PC-9 (cell line): ENCODE measurements at regions of chr22 and their contacts with region 1.

Region 1: DNA sequence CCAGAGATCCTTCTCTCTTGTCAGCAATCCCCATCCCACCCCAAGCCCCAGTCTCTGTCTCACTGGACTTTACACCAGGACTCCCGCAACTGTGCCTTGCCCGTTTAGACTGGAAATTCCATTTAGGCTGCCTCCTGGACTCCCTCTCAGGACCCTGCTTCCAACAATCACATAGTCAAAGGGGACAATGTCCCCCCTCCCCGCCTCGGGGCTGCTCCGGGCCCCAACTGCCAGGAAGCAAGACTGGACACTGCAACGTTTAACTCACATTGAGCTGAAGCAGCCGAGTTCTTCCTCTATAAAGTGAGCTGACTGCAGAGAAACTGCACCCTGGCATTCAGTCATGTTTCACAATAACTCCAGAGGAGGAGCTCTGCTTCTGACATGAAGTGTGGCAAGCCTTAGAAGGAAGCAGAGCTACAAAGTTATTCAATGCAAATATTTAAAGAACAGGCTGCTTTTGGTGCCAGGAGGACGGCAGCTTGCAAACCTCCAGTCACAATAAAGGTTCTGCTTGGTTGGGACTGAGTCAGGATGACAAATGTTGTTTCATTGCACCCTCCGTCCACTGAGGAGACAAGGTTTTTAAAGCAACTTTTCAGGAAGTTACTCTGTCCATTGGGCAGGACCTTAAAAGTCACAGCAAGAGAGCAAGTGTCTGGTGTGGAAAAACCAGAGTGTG is 19.9 kb downstream of the PACSIN2 start:
- DNase-seq: peak; percentile 72 to 99
- H3K4me3 ChIP-seq: peak overlapping the region; percentile 47; the same call in 1 of the 2 replicates
- H3K27ac ChIP-seq: peak overlapping the region; percentile 98
- H3K4me1 ChIP-seq: peaks cover 83% of the 10 kb centered on the region
- H3K27me3 ChIP-seq: no peaks in the 10 kb centered on the region
- CTCF ChIP-seq: no peak

Region 2: DNA sequence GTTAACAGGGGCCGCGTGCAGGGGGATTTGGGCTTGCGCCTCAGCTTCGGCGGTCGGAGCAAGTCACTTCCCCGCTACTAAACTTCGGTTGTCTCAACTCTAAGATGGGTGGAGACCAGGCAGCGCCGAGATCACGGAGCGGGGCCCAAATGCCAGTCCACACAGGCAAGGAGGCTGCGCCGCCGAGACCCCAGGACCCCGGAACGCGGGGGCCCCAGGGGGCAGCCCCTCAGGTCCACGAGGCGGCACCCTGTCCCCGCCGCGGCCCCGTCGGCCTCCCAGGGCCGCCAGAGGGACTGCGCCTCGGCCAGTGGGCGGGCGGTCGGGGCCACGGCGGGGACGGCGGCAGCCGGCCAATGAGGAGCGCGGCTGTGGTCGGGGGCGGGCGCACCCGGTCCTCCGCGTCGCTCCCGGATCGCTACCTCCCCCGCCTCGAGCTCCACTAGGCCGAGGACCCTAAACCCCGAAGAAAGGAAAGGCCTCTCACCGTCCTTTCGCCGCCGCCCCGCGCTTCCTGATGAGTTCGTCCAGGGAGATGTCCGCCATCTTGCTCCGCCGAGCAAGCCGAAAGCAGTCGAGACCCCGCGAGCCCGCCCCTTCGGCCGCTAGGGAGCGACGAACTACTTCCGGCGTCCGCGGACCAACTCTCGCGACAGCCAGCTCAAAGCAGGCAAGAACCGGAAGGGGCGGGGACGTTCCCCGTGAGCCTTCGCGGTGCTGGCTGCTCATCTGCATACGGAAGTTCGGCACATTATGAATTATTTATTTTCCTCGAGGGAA is 380.5 kb before region 1 on chr22 and contains the start of gene POLDIP3:
- CTCF ChIA-PET with region 1: no interaction called
- POLR2A ChIA-PET with region 1: interaction called, 24 read pairs
- intact Hi-C with region 1: no loop called
- DNase-seq: peak; percentile 93 to 97
- H3K4me3 ChIP-seq: peak within 1 kb of the TSS; percentile 100
- H3K27ac ChIP-seq: peak within 1 kb of the TSS; percentile 96
- H3K4me1 ChIP-seq: peaks cover 30% of the 10 kb centered on the region
- H3K27me3 ChIP-seq: no peaks in the 10 kb centered on the region
- CTCF ChIP-seq: no peak
- total RNA-seq, gene POLDIP3: 60.1 and 62.9 TPM in 2 replicates

Region 3: GRCh38 chr22:42919199-42919598 is 75.8 kb before region 1 on chr22:
- CTCF ChIA-PET with region 1: no interaction called
- POLR2A ChIA-PET with region 1: no interaction called
- intact Hi-C with region 1: no loop called
- DNase-seq: peak; percentile 38 to 75
- H3K4me3 ChIP-seq: no peak overlapping the region
- H3K27ac ChIP-seq: peak overlapping the region; percentile 37
- H3K4me1 ChIP-seq: peaks cover 46% of the 10 kb centered on the region
- H3K27me3 ChIP-seq: no peaks in the 10 kb centered on the region
- CTCF ChIP-seq: no peak

Region 4: GRCh38 chr22:43007519-43008102 is 12.6 kb after region 1 on chr22:
- CTCF ChIA-PET with region 1: interaction called, 6 read pairs
- POLR2A ChIA-PET with region 1: interaction called, 10 read pairs
- intact Hi-C with region 1: loop called (anchors 1 kb)
- DNase-seq: no peak
- H3K4me3 ChIP-seq: no peak overlapping the region
- H3K27ac ChIP-seq: no peak overlapping the region
- H3K4me1 ChIP-seq: peaks cover 83% of the 10 kb centered on the region
- H3K27me3 ChIP-seq: no peaks in the 10 kb centered on the region
- CTCF ChIP-seq: no peak

Region 5: DNA sequence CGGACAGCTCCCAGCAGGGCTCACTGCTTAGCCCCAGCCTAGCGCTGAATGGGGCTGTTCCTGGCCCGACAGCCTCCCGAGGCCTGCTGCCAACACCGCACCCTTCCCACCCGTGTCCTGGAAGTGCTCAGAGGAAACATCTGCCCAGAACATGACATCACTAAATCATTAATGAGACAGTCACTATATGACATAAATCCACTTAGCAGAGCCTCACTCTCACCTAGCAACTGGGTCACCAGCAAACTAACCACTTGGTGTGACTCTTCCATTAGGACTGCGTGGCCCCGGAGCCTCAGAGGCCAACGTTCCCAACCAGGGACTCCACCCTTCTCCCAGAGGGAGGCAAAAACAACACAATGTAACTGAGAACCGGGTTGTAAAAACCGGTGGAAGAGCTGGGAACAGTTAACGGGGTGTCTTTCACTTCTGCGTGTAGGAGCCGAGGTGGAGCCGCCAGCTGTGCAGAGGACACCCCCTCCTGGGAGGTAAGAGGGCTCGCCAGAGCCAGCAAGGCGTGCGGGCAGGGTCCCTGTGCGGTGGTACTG is 41.3 kb after region 1 on chr22:
- CTCF ChIA-PET with region 1: interaction called, 3 read pairs
- POLR2A ChIA-PET with region 1: interaction called, 5 read pairs
- intact Hi-C with region 1: loop called (anchors 5 kb)
- DNase-seq: no peak
- H3K4me3 ChIP-seq: no peak overlapping the region
- H3K27ac ChIP-seq: no peak overlapping the region
- H3K4me1 ChIP-seq: peaks cover 9% of the 10 kb centered on the region
- H3K27me3 ChIP-seq: no peaks in the 10 kb centered on the region
- CTCF ChIP-seq: no peak

Region 6: DNA sequence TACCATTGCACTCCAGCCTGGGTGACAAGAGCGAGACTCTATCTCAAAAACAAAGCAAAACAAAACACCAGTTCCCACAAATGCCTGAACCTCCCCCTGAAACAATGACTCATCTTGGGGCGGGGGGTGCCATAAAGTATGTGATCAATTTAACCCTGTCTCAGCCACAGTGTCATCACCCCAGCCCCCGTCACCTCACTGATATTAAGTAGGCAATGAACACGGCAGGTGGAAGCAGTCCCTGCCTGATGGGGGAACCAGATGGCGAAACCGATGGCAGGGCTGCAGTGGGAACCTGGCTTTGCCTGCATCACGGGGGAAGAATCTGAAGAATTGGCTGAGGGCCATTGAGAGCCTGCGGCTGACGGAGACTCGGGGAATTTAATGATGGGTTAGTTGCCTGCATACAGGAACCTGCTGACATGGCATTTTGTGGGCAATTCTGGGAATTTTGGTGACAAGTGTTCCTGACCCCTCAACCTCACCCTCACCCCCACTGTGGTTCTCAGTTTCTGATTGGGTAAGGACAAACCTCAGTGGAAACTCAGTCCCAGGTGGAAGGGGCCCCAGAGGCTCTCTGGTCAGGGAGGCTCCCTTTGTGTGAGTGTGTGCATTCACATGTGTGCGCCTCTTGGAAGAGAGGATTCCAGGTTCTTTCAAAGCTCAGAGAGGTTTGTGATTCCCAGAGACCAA is 1356.8 kb after region 1 on chr22:
- CTCF ChIA-PET with region 1: no interaction called
- POLR2A ChIA-PET with region 1: no interaction called
- intact Hi-C with region 1: no loop called
- DNase-seq: peak; percentile 87 to 93
- H3K4me3 ChIP-seq: peak overlapping the region; percentile 1; the same call in 1 of the 2 replicates
- H3K27ac ChIP-seq: peak overlapping the region; percentile 76
- H3K4me1 ChIP-seq: peaks cover 22% of the 10 kb centered on the region
- H3K27me3 ChIP-seq: no peaks in the 10 kb centered on the region
- CTCF ChIP-seq: no peak

Region 7: GRCh38 chr22:44796972-44797725 is 1802.1 kb after region 1 on chr22:
- CTCF ChIA-PET with region 1: no interaction called
- POLR2A ChIA-PET with region 1: interaction called, 36 read pairs
- intact Hi-C with region 1: no loop called
- DNase-seq: no peak
- H3K4me3 ChIP-seq: no peak overlapping the region
- H3K27ac ChIP-seq: no peak overlapping the region
- H3K4me1 ChIP-seq: no peaks in the 10 kb centered on the region
- H3K27me3 ChIP-seq: no peaks in the 10 kb centered on the region
- CTCF ChIP-seq: no peak